Lower leg skin (tissue), 4 donors: ENCODE measurements at regions of chr22 and their contacts with region 1.

Region 1: GRCh38 chr22:19629720-19630419 is 84.4 kb upstream of the SEPTIN5 start:
- DNase-seq: peak; percentile 69 to 95
- H3K4me3 ChIP-seq: no peak overlapping the region
- CTCF ChIP-seq: peak in 1 of 3 donors; percentile 68
- POLR2A ChIP-seq: no peak

Region 2: DNA sequence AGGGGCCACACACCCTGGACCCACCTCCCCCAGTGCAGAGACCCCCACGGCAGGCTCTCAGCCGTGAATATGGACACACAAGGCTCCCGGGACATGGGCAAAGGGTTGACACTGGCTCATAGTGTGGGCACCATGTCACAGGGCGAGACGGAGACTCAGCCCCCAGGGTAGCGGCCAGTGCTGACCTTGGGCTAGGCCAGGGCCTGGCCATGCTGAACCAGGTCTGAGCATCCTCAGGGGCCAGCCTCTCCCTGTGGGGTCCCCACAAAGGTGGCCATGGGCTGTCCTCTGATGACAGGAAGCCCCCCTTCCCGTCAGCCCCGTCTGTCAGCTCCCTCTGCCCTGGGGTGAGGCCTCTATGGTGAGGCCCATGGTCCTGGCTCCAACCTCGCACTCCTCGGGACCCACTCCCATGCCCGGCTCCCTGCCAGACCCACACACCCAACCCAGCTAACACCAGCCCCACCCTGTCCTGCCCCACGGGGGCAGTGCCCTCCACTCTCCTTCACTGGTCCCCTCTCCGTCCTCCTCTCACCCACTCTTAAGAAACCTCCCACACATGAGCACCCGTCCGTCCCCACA is 674.8 kb before region 1 on chr22:
- intact Hi-C with region 1: loop called (anchors 5 kb)
- DNase-seq: no peak
- H3K4me3 ChIP-seq: no peak overlapping the region
- CTCF ChIP-seq: no peak
- POLR2A ChIP-seq: no peak

Region 3: GRCh38 chr22:19130959-19131684 is 498.7 kb before region 1 on chr22 and contains the start of gene TSSK2:
- intact Hi-C with region 1: loop called (anchors 10 kb)
- DNase-seq: no peak
- H3K4me3 ChIP-seq: no peak within 1 kb of the TSS
- CTCF ChIP-seq: no peak
- POLR2A ChIP-seq: no peak
- total RNA-seq, gene TSSK2: not detected